ENCODE measurements at regions of chr9 and their contacts with region 1.

Region 1: DNA sequence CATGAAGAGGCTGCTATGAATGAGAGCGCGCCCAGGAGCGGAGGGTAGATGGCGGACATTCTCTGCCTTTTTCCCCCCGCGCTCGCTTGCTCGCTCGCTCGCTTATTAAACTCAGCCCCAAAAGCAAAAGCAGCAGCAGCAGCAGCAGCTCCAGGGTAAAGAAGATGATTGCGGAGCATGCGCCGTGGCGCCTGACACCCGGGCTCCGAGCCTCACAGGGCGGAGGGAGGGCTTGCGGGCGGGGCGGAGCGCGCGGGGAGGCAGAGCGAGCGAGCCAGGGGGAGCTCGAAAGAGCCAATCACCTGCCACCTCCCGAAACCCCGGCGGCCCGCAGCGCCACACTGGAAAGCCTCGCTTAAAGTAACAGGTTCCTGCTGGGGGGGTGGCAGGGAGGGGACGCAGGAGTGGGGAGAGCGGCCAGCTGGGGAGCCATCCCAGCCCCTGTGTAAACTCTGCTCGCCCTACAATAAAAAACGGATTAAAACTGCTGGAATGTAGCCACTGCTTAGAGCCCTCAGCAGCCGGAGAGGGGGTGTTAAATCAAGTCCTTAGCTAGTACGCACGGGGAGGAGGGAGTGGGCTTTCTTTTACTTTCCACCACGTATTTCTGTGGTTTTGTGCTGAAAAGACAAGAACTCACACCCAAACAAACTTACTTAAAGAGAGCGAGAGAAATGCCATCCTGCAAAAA is at the start of gene MLLT3:
- DNase-seq: peak; percentile 95
- H3K4me3 ChIP-seq: peak within 1 kb of the TSS; percentile 80 to 90
- H3K27ac ChIP-seq: peak within 1 kb of the TSS; percentile 87 to 90
- H3K4me1 ChIP-seq: peaks cover 2% of the 10 kb centered on the region
- H3K27me3 ChIP-seq: no peaks in the 10 kb centered on the region
- CTCF ChIP-seq: peak in 2 of 4 experiments; percentile 30
- POLR2A ChIP-seq: peak; percentile 76
- total RNA-seq, gene MLLT3: 13.1 to 22.0 TPM

Region 2: DNA sequence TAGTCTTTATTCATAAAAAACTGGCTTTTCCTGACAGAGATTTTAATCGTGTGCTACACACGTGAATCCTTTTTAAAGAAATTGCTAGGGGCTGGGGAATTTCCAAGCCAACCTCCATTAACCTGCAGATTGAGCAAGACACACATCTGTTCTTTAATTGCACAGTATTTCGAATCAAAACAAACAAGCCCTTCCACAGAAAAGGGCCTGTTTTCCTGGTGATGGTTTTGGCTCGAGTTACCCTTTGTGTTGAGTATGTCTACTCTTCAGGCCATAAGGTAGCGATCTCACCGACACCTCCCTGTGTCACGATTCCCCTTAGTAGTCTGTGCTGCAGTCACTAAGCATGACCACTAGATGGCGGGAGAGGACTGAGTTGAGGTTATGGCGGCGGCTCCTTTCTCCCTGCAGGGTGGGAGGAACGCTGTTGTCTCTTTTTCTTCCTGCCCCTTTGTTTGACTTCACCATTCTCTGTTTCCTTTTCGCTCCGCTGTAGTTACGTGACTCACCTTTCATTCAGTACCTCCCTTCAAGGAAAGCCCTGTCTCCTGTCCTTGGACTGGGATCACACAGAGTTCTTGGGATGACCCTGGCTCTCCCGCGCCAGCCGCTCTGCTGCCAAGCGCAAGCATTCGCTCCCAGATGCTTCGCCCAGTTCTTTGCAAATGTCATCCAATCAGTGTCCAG is 696.5 kb before region 1 on chr9:
- intact Hi-C with region 1: loop called (anchors 2 kb)
- DNase-seq: peak; percentile 67
- H3K4me3 ChIP-seq: peak overlapping the region; percentile 23 to 27
- H3K27ac ChIP-seq: peak overlapping the region in 1 of 2 donors; percentile 26
- H3K4me1 ChIP-seq: no peaks in the 10 kb centered on the region
- H3K27me3 ChIP-seq: no peaks in the 10 kb centered on the region
- CTCF ChIP-seq: peak; percentile 88 to 94 (median 92)
- POLR2A ChIP-seq: no peak

Region 3: DNA sequence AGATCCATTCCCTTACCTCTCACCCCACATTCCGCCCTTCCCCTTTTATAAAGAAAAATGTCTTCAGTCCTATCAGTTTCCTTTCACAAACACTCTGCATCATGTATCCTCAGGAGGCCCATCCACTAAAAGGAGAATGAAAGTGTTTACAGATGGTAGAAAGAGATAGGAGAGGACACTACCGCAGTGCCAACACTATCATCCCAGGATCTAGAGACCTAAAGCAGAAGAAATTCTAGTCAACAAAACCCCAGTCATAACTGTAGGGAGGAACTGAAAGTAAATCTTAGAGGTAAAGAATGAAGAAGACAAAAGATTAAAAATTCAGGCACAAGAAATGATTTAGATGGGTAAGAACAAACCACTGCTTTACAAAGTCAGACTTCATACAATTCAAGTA is 114.2 kb before region 1 on chr9:
- intact Hi-C with region 1: loop called (anchors 5 kb)
- DNase-seq: no peak
- H3K4me3 ChIP-seq: no peak overlapping the region
- H3K27ac ChIP-seq: no peak overlapping the region
- H3K4me1 ChIP-seq: no peaks in the 10 kb centered on the region
- H3K27me3 ChIP-seq: no peaks in the 10 kb centered on the region
- CTCF ChIP-seq: no peak
- POLR2A ChIP-seq: no peak

Region 4: DNA sequence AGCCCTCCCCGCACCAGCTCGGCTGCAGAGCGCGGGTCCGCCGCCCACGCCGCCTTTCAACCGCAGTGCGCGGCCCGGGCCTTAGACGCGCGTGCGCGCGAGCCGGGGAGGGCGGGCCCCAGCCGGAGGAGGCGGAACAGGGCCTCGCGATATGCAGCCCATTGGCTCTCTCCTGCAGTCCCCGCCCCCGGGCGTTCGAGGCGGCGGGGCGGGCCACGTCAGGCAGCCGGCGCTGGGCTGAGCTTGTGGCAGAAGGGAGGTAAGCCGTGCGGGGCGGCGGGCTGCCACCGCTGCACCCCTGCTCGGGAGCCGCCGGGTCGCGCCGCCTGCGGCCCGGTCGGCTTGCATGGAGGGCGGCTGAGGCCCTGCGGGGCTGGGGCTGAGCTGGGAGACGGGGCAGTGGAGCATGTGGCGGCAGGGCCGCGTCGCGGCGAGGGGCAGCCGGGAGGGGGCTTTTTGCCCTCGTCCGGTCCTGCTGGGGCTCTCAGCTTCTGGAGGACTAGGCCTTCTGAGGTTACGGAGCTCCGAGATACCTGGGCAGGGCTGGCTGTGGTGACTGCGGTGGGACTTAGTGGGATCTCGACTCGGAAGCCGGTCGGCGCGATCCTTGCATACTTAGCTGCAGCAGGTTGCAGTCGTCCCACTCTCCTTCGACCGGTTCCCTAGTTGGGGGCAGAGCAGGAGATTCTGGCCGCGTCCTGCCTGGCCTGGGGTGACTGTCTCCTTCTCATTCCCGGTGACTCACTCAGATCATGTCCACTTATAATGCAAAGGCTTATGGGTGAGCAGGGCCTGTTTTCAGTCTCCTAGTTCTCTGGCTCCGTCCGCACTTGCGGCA is 61.8 kb after region 1 on chr9 and contains the start of gene FOCAD:
- intact Hi-C with region 1: loop called (anchors 5 kb)
- DNase-seq: peak; percentile 95
- H3K4me3 ChIP-seq: peak within 1 kb of the TSS; percentile 83 to 85
- H3K27ac ChIP-seq: peak within 1 kb of the TSS; percentile 81 to 83
- H3K4me1 ChIP-seq: no peaks in the 10 kb centered on the region
- H3K27me3 ChIP-seq: no peaks in the 10 kb centered on the region
- CTCF ChIP-seq: peak in 3 of 4 experiments; percentile 17 to 39 (median 38)
- POLR2A ChIP-seq: peak; percentile 97
- total RNA-seq, gene FOCAD: 32.0 to 76.1 TPM

Region 5: GRCh38 chr9:21096172-21096900 is 473.9 kb after region 1 on chr9:
- intact Hi-C with region 1: loop called (anchors 10 kb)
- DNase-seq: no peak
- H3K4me3 ChIP-seq: peak overlapping the region in 1 of 2 donors; percentile 3
- H3K27ac ChIP-seq: peak overlapping the region in 1 of 2 donors; percentile 42
- H3K4me1 ChIP-seq: no peaks in the 10 kb centered on the region
- H3K27me3 ChIP-seq: no peaks in the 10 kb centered on the region
- CTCF ChIP-seq: no peak
- POLR2A ChIP-seq: no peak

Measured in prostate gland (tissue), 2 donors.